ENCODE measurements at regions of chr11 and their contacts with region 1.

Region 1: GRCh38 chr11:20213790-20214189 is 53.5 kb upstream of the DBX1 start:
- DNase-seq: no peak
- H3K4me3 ChIP-seq: no peak overlapping the region
- H3K27ac ChIP-seq: no peak overlapping the region
- H3K4me1 ChIP-seq: no peaks in the 10 kb centered on the region
- H3K27me3 ChIP-seq: peaks cover 89% of the 10 kb centered on the region
- CTCF ChIP-seq: no peak

Region 2: GRCh38 chr11:20013346-20014066 is 200.3 kb before region 1 on chr11:
- CTCF ChIA-PET with region 1: no interaction called
- POLR2A ChIA-PET with region 1: no interaction called
- intact Hi-C with region 1: no loop called
- DNase-seq: peak in 1 of 2 experiments; percentile 91
- H3K4me3 ChIP-seq: no peak overlapping the region
- H3K27ac ChIP-seq: peak overlapping the region; percentile 35
- H3K4me1 ChIP-seq: peaks cover 37% of the 10 kb centered on the region
- H3K27me3 ChIP-seq: no peaks in the 10 kb centered on the region
- CTCF ChIP-seq: no peak

Region 3: GRCh38 chr11:20754933-20755332 is 541.1 kb after region 1 on chr11:
- CTCF ChIA-PET with region 1: no interaction called
- POLR2A ChIA-PET with region 1: interaction called, 13 read pairs
- intact Hi-C with region 1: no loop called
- DNase-seq: no peak
- H3K4me3 ChIP-seq: no peak overlapping the region
- H3K27ac ChIP-seq: no peak overlapping the region
- H3K4me1 ChIP-seq: no peaks in the 10 kb centered on the region
- H3K27me3 ChIP-seq: peaks cover under 1% of the 10 kb centered on the region; the same call in 1 of the 2 replicates
- CTCF ChIP-seq: no peak; the same call in 1 of the 2 replicates

Measured in PC-9 (cell line).